HepG2 (cell line): ENCODE measurements at regions of chr1 and their contacts with region 1.

Region 1: DNA sequence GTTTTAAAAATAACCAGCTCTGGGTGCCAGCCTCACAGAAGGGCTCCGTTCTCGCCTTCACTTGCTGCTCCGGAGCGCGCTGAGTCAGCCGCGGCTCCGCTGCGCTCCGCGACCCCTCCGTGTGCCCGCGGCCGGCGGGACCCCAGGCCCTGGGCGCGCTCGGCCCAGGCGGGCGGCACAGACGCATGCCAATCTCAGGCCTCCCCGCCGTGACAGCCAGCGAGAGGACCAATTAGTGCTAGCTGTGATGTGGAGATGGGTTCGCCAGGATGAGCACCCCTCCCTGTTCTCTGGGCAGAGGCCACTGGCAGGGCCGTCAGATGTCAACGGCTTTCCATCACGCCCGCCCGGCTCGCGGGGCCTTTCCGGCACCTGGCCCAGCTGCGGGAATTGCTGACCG is 293.8 kb downstream of the SPATA17 start:
- DNase-seq: no peak
- ATAC-seq: no peak
- H3K4me3 ChIP-seq: no peak overlapping the region
- H3K27ac ChIP-seq: no peak overlapping the region
- H3K4me1 ChIP-seq: no peaks in the 10 kb centered on the region
- H3K27me3 ChIP-seq: peaks cover 0 to 4% of the 10 kb centered on the region in 2 experiments; a peak in 1 of 5 replicates
- CTCF ChIP-seq: no peak
- EP300 ChIP-seq: no peak
- POLR2A ChIP-seq: no peak
- RAD21 ChIP-seq: no peak

Region 2: GRCh38 chr1:216690603-216691002 is 1234.3 kb before region 1 on chr1:
- CTCF ChIA-PET with region 1: no interaction called
- POLR2A ChIA-PET with region 1: no interaction called
- in situ Hi-C with region 1: no loop called
- intact Hi-C with region 1: loop called (anchors 10 kb)
- DNase-seq: no peak
- ATAC-seq: no peak
- H3K4me3 ChIP-seq: no peak overlapping the region
- H3K27ac ChIP-seq: no peak overlapping the region
- H3K4me1 ChIP-seq: no peaks in the 10 kb centered on the region
- H3K27me3 ChIP-seq: no peaks in the 10 kb centered on the region
- CTCF ChIP-seq: no peak
- EP300 ChIP-seq: no peak
- POLR2A ChIP-seq: no peak
- RAD21 ChIP-seq: no peak